ENCODE measurements at regions of chr4 and their contacts with region 1.

Region 1: GRCh38 chr4:149999485-150000074 is 78.7 kb upstream of the DCLK2 start:
- DNase-seq: no peak
- H3K4me3 ChIP-seq: no peak overlapping the region
- H3K27ac ChIP-seq: no peak overlapping the region
- H3K4me1 ChIP-seq: peaks cover 15% of the 10 kb centered on the region
- H3K27me3 ChIP-seq: no peaks in the 10 kb centered on the region
- CTCF ChIP-seq: peak; percentile 79

Region 2: GRCh38 chr4:150242820-150243458 is 243.4 kb after region 1 on chr4:
- intact Hi-C with region 1: loop called (anchors 5 kb)
- DNase-seq: no peak
- H3K4me3 ChIP-seq: no peak overlapping the region
- H3K27ac ChIP-seq: no peak overlapping the region
- H3K4me1 ChIP-seq: no peaks in the 10 kb centered on the region
- H3K27me3 ChIP-seq: no peaks in the 10 kb centered on the region
- CTCF ChIP-seq: peak; percentile 93

Measured in left ventricle myocardium inferior (tissue), 1 donor.